GM12878 (cell line): ENCODE measurements at regions of chr6 and their contacts with region 1.

Region 1: DNA sequence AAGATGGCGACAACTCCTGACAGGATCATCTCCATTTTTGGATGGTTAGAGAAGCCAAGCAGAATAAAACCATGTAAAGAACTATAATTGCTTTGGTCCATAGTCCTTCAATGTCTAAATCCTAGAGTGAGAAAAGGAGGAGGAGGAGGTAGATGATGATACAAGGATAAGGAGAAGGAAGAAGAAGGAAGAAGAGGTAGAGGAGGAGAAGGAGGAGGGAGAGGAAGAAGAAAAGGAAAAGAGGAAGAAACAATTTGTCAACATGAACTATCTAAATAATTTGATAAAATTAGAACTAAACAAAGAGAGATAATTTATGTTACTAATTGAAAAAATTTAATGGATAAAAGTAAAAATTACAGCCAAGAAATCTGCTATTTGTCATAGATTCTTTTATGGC is at the start of gene OR2W1:
- DNase-seq: no peak
- ATAC-seq: no peak
- H3K4me3 ChIP-seq: no peak within 1 kb of the TSS
- H3K27ac ChIP-seq: no peak within 1 kb of the TSS
- H3K4me1 ChIP-seq: no peaks in the 10 kb centered on the region
- H3K27me3 ChIP-seq: no peaks in the 10 kb centered on the region
- CTCF ChIP-seq: no peak
- EP300 ChIP-seq: no peak
- POLR2A ChIP-seq: no peak
- RAD21 ChIP-seq: no peak
- polyA plus RNA-seq, gene OR2W1: not detected

Region 2: DNA sequence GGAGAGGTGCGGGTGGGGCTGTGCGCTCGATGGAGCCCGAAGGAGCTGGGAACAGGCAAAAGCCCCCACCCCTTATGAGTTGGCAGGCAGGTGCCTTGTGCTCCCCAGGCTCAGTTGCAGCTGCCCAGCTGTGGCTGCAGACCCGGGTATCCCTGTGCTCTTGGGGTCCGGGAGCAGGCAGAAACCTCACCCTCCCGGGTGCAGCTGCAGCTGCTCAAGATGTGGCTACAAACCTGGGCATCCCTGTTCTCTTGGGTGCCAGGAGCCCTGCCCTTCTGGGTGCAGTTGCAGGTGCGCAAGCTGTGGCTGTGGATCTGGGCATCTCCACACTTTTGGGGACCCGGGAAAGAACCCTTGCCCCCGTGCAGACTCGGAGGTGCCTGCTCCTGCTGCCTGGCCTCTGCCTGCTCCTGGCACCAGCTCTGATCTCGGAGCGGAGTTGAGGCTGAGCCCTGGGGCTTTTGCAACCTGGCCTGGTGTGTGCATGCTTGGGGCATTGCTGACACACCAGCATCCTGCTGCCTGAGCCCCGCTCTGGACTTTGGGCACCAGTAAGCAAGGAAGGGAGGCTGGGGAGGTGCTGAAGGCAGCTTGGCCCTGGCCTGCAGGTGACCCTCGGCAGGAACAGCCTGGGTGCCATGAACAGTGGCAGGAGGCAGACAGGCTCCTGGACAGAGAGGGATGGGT is 84.4 kb after region 1 on chr6:
- CTCF ChIA-PET with region 1: no interaction called
- POLR2A ChIA-PET with region 1: interaction called, 10 read pairs
- RAD21 ChIA-PET with region 1: no interaction called
- SMC1A ChIA-PET with region 1: no interaction called
- in situ Hi-C with region 1: no loop called
- intact Hi-C with region 1: no loop called
- DNase-seq: no peak
- ATAC-seq: no peak
- H3K4me3 ChIP-seq: no peak overlapping the region
- H3K27ac ChIP-seq: no peak overlapping the region
- H3K4me1 ChIP-seq: no peaks in the 10 kb centered on the region
- H3K27me3 ChIP-seq: peaks cover 0 to 3% of the 10 kb centered on the region in 2 experiments; a peak in 1 of 4 replicates
- CTCF ChIP-seq: no peak
- EP300 ChIP-seq: no peak
- POLR2A ChIP-seq: no peak
- RAD21 ChIP-seq: no peak